ENCODE measurements at regions of chr19 and their contacts with region 1.

Region 1: DNA sequence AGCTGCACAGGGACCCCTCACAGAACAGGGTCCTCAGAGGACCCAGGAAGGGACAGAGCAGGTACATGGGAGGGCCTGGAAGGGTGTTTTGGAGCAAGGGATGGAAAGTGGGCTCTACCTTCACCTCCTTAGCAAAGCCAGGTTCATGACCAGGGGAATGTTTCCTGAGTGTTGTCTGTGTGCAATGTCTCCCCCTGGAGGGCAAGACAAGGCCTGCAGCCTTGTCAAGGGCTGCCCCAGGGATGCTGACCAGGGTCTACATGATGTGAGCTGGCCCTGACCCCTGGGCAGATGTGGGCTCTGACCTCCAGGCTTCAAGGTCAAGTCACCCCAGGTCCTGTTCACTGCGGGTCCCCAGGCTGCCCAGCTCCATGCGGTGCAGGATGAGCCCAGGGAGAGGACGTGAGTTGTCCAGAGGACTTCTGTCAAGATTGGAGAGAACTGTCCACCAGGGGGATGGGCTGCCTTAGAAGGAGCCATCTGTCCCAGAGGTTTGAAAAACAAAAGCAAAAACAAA is 1.0 kb upstream of the CEACAM1 start:
- DNase-seq: peak; percentile 19
- ATAC-seq: peak; percentile 95
- H3K4me3 ChIP-seq: no peak overlapping the region
- H3K27ac ChIP-seq: no peak overlapping the region
- H3K4me1 ChIP-seq: no peaks in the 10 kb centered on the region
- H3K27me3 ChIP-seq: peaks cover 18% of the 10 kb centered on the region
- CTCF ChIP-seq: peak; percentile 71
- POLR2A ChIP-seq: no peak
- RAD21 ChIP-seq: peak; percentile 64

Region 2: GRCh38 chr19:42450314-42450934 is 78.9 kb before region 1 on chr19:
- CTCF ChIA-PET with region 1: interaction called, 3 read pairs
- POLR2A ChIA-PET with region 1: no interaction called
- dilution Hi-C with region 1: no loop called
- in situ Hi-C with region 1: loop called (anchors 5 kb)
- intact Hi-C with region 1: loop called (anchors 1 kb)
- DNase-seq: peak; percentile 82
- ATAC-seq: peak; percentile 93
- H3K4me3 ChIP-seq: no peak overlapping the region
- H3K27ac ChIP-seq: no peak overlapping the region
- H3K4me1 ChIP-seq: no peaks in the 10 kb centered on the region
- H3K27me3 ChIP-seq: peaks cover 24% of the 10 kb centered on the region
- CTCF ChIP-seq: peak; percentile 84
- POLR2A ChIP-seq: no peak
- RAD21 ChIP-seq: peak; percentile 88